Mammary epithelial cell (primary cell): ENCODE measurements at regions of chr17 and their contacts with region 1.

Region 1: DNA sequence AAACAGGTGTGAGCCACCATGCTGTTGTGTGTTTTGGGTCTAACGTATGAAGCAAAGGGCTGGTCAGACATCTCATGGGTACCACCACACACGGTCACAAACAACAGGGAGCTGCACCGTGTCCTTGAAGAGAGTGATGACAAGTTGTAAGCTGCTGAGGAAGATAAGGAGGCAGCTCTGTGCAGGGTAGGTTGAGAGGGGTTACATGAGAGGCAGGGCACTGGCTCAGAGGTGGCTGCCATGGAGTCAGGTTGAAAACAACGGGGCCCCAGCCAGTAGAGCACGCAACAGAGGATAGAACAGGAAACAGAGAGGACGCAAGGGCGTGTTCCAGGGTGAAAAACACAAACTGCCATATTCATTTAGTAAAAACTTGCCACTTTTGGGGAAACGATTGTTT is 52.2 kb downstream of the TRARG1 start:
- DNase-seq: no peak
- H3K4me3 ChIP-seq: no peak overlapping the region
- H3K27ac ChIP-seq: no peak overlapping the region
- H3K4me1 ChIP-seq: no peaks in the 10 kb centered on the region
- H3K27me3 ChIP-seq: no peaks in the 10 kb centered on the region
- CTCF ChIP-seq: no peak

Region 2: DNA sequence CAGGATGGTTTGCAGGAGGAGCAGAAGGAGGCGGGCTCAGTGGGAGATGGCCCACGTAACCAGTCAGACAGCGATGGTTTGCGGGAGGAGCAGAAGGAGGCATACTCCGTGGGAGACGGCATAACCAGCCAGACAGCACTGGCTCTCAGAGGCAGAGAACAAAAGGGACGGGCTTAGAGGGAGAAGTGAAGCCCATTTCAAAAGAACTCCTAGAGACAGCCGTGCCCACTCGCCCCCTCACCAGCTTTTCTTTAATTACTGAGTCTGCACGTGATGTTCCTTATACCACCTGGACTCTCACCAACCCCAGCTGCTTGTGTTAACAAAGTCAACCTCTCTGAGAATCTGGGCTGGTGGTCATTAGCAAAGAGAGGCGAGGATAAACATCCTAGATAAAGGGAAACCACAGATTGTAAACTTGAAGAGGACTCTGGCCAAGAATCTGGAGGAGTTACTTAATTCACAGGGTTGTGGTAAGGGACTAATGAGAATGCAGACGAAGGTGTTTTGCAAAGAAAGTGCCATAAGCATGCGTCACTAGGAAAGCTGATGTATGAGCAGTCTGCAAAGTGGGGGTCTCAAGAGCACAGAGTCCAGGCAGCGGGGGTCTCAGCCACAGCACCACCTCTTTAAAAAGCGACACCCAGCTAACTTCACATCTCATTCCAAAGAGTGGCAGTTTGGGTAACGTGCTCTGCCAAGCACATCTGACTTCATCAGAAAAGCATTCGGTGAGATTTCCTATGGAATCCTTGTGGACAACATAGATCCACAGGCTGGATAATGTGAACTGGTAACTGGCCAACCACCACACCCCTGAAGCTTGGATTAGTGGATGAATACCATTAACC is 403.9 kb before region 1 on chr17:
- CTCF ChIA-PET with region 1: no interaction called
- dilution Hi-C with region 1: no loop called
- in situ Hi-C with region 1: no loop called
- intact Hi-C with region 1: no loop called
- DNase-seq: peak; percentile 87
- H3K4me3 ChIP-seq: peak overlapping the region in 1 of 3 experiments; percentile 1
- H3K27ac ChIP-seq: peak overlapping the region; percentile 95
- H3K4me1 ChIP-seq: peaks cover 66% of the 10 kb centered on the region
- H3K27me3 ChIP-seq: no peaks in the 10 kb centered on the region
- CTCF ChIP-seq: no peak

Region 3: GRCh38 chr17:1122533-1123392 is 208.9 kb before region 1 on chr17:
- CTCF ChIA-PET with region 1: no interaction called
- dilution Hi-C with region 1: no loop called
- in situ Hi-C with region 1: no loop called
- intact Hi-C with region 1: loop called (anchors 1 kb)
- DNase-seq: peak; percentile 68
- H3K4me3 ChIP-seq: no peak overlapping the region
- H3K27ac ChIP-seq: no peak overlapping the region
- H3K4me1 ChIP-seq: peaks cover 20% of the 10 kb centered on the region
- H3K27me3 ChIP-seq: no peaks in the 10 kb centered on the region
- CTCF ChIP-seq: peak; percentile 77 to 86

Region 4: GRCh38 chr17:1260086-1260769 is 71.5 kb before region 1 on chr17:
- CTCF ChIA-PET with region 1: interaction called, 12 read pairs
- dilution Hi-C with region 1: no loop called
- in situ Hi-C with region 1: loop called (anchors 5 to 10 kb)
- intact Hi-C with region 1: loop called (anchors 1 kb)
- DNase-seq: no peak
- H3K4me3 ChIP-seq: peak overlapping the region in 2 of 3 experiments; percentile 24 to 65
- H3K27ac ChIP-seq: no peak overlapping the region
- H3K4me1 ChIP-seq: peaks cover 4% of the 10 kb centered on the region
- H3K27me3 ChIP-seq: peaks cover 3% of the 10 kb centered on the region
- CTCF ChIP-seq: no peak

Region 5: GRCh38 chr17:1267471-1267947 is 64.2 kb before region 1 on chr17:
- CTCF ChIA-PET with region 1: no interaction called
- dilution Hi-C with region 1: no loop called
- in situ Hi-C with region 1: loop called (anchors 5 to 10 kb)
- intact Hi-C with region 1: no loop called
- DNase-seq: no peak
- H3K4me3 ChIP-seq: peak overlapping the region; percentile 57 to 75 (median 67)
- H3K27ac ChIP-seq: no peak overlapping the region
- H3K4me1 ChIP-seq: no peaks in the 10 kb centered on the region
- H3K27me3 ChIP-seq: peaks cover 19% of the 10 kb centered on the region
- CTCF ChIP-seq: no peak

Region 6: GRCh38 chr17:1275962-1276736 is 55.6 kb before region 1 on chr17:
- CTCF ChIA-PET with region 1: no interaction called
- dilution Hi-C with region 1: no loop called
- in situ Hi-C with region 1: no loop called
- intact Hi-C with region 1: loop called (anchors 1 kb)
- DNase-seq: no peak
- H3K4me3 ChIP-seq: no peak overlapping the region
- H3K27ac ChIP-seq: no peak overlapping the region
- H3K4me1 ChIP-seq: no peaks in the 10 kb centered on the region
- H3K27me3 ChIP-seq: peaks cover 10% of the 10 kb centered on the region
- CTCF ChIP-seq: peak; percentile 57 to 88

Region 7: DNA sequence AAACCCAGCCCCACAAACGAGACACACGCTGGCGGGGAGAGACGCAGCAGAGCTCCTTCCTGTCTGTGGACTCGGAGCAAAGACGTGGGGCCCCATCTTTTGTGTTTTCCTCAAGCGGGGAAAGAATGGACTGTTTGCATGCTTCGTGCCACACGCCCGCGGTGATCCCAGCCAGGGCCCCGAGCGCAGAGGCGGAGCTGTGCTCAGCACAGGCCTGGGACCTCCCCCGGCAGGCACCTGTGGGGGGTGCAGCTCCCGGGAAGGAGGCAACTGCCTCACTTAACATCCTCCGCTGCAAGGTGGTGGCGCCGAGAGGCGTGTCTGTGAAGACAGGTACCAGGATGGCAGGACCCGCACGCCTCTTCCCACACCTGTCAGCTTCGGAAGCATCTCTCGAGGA is 33.1 kb before region 1 on chr17:
- CTCF ChIA-PET with region 1: no interaction called
- dilution Hi-C with region 1: loop called (anchors 5 kb)
- in situ Hi-C with region 1: no loop called
- intact Hi-C with region 1: no loop called
- DNase-seq: no peak
- H3K4me3 ChIP-seq: no peak overlapping the region
- H3K27ac ChIP-seq: no peak overlapping the region
- H3K4me1 ChIP-seq: no peaks in the 10 kb centered on the region
- H3K27me3 ChIP-seq: peaks cover 13% of the 10 kb centered on the region
- CTCF ChIP-seq: no peak